IMR-90 (cell line): ENCODE measurements at regions of chr5 and their contacts with region 1.

Region 1: GRCh38 chr5:142655339-142656267 is 30.3 kb downstream of the FGF1 start:
- DNase-seq: peak; percentile 74
- ATAC-seq: peak; percentile 100
- H3K4me3 ChIP-seq: no peak overlapping the region
- H3K27ac ChIP-seq: no peak overlapping the region
- H3K4me1 ChIP-seq: peaks cover 2% of the 10 kb centered on the region; the same call in 1 of the 2 replicates
- H3K27me3 ChIP-seq: no peaks in the 10 kb centered on the region
- CTCF ChIP-seq: peak; percentile 99
- POLR2A ChIP-seq: peak; percentile 58; the same call in 1 of the 2 replicates
- RAD21 ChIP-seq: peak; percentile 100

Region 2: GRCh38 chr5:142600611-142601358 is 54.8 kb before region 1 on chr5:
- CTCF ChIA-PET with region 1: interaction called, 13 read pairs
- POLR2A ChIA-PET with region 1: no interaction called
- dilution Hi-C with region 1: no loop called
- in situ Hi-C with region 1: no loop called
- intact Hi-C with region 1: no loop called
- DNase-seq: peak; percentile 91
- ATAC-seq: peak; percentile 92
- H3K4me3 ChIP-seq: peak overlapping the region; percentile 14; the same call in 1 of the 2 replicates
- H3K27ac ChIP-seq: peak overlapping the region; percentile 82
- H3K4me1 ChIP-seq: peaks cover 20% of the 10 kb centered on the region
- H3K27me3 ChIP-seq: no peaks in the 10 kb centered on the region
- CTCF ChIP-seq: no peak
- POLR2A ChIP-seq: no peak
- RAD21 ChIP-seq: peak; percentile 20

Region 3: DNA sequence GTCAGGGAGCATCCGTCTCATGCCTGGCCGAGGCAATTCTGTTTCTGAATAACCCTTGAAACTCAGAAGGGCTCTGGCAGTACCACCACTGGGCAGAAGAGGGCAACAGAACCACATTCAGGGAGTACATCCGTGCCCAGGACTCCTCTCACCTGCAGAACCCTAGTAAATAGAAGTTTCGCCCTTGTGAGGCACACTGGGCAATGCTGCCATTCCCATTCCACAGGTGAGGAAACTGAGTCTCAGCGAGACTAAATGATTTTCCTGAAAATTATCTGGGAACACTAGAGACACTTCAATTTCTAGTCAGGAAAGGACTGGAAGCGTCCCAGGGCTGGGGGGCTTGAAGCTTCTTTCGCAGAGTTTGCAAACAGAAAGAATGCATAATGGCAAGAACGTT is 44.4 kb before region 1 on chr5:
- CTCF ChIA-PET with region 1: interaction called, 19 read pairs
- POLR2A ChIA-PET with region 1: no interaction called
- dilution Hi-C with region 1: no loop called
- in situ Hi-C with region 1: no loop called
- intact Hi-C with region 1: loop called (anchors 1 kb)
- DNase-seq: peak; percentile 74
- ATAC-seq: peak; percentile 86
- H3K4me3 ChIP-seq: no peak overlapping the region
- H3K27ac ChIP-seq: no peak overlapping the region
- H3K4me1 ChIP-seq: peaks cover 16% of the 10 kb centered on the region
- H3K27me3 ChIP-seq: no peaks in the 10 kb centered on the region
- CTCF ChIP-seq: peak; percentile 96
- POLR2A ChIP-seq: peak; percentile 36; the same call in 1 of the 2 replicates
- RAD21 ChIP-seq: peak; percentile 96

Region 4: DNA sequence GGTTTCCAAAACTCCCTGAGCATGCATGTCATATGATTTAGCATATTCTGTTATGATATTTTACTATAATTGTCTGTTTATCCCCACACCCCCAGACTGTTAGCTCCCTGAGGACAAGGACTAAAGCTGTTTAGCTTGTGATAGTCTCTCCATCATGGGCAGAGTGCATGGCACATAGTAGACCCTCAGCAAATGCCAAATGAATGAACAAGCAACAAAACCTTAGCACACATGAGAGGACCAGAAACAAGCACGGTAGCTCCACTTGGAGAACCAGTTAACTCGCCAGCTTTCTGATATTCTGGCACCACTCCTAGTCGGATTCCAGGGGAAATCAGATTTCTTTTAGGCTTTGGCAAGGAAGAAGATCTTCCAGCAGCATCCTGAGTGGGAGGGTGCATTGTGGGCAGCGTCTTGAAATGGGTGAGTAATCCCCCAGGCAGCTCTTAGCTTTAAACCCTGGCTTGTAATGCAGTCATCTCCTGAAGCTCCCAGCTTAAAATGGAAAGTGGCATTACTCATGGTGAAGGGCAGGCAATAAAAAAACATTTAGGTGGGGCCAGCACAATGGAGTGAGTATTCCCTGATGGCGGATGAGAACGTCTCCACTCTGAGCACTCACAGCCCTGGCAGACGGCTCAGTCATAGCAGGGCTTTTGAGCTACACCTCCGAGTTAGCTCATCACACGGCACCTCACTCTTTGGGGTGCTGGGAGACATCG is 10.8 kb before region 1 on chr5:
- CTCF ChIA-PET with region 1: interaction called, 31 read pairs
- POLR2A ChIA-PET with region 1: no interaction called
- dilution Hi-C with region 1: no loop called
- in situ Hi-C with region 1: no loop called
- intact Hi-C with region 1: no loop called
- DNase-seq: peak; percentile 99
- ATAC-seq: peak; percentile 97
- H3K4me3 ChIP-seq: peak overlapping the region; percentile 2; the same call in 1 of the 2 replicates
- H3K27ac ChIP-seq: peak overlapping the region; percentile 79
- H3K4me1 ChIP-seq: peaks cover 23% of the 10 kb centered on the region
- H3K27me3 ChIP-seq: no peaks in the 10 kb centered on the region
- CTCF ChIP-seq: no peak
- POLR2A ChIP-seq: peak; percentile 60
- RAD21 ChIP-seq: no peak; the same call in 1 of the 2 replicates

Region 5: GRCh38 chr5:142685418-142686209 is 30.0 kb after region 1 on chr5 and contains the start of gene FGF1:
- CTCF ChIA-PET with region 1: interaction called, 10 read pairs
- POLR2A ChIA-PET with region 1: no interaction called
- dilution Hi-C with region 1: no loop called
- in situ Hi-C with region 1: no loop called
- intact Hi-C with region 1: no loop called
- DNase-seq: no peak
- ATAC-seq: no peak
- H3K4me3 ChIP-seq: no peak within 1 kb of the TSS
- H3K27ac ChIP-seq: no peak within 1 kb of the TSS
- H3K4me1 ChIP-seq: peaks cover 22% of the 10 kb centered on the region
- H3K27me3 ChIP-seq: no peaks in the 10 kb centered on the region
- CTCF ChIP-seq: no peak
- POLR2A ChIP-seq: no peak
- RAD21 ChIP-seq: no peak
- total RNA-seq, gene FGF1: 7.7 and 8.1 TPM in 2 replicates

Region 6: DNA sequence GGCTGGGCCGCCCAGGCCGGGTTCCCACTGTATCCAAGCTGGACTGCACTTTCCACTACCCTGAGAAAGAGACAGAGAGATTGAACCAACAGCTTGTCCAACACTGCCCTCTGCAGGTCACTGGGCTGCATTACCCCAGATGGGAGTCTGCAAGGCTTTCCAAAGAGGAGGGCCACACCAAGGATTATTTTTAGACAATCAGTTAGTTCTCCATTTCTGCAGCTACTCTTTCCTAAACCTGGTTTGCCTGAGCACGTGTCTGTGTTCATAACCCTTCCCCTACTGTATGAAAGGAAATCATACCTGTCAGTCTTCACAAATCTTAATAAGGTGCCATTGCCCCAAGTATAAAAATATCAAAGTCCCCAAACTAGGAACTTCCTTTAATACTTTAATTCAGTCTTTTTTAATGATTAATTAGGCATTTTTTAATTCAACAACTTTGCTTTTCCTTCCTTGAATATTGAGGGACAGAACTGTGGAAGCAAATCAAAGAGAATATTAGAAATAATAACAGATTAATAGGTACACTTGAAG is 43.6 kb after region 1 on chr5:
- CTCF ChIA-PET with region 1: interaction called, 67 read pairs
- POLR2A ChIA-PET with region 1: interaction called, 4 read pairs
- dilution Hi-C with region 1: no loop called
- in situ Hi-C with region 1: loop called (anchors 5 kb)
- intact Hi-C with region 1: loop called (anchors 1 kb)
- DNase-seq: peak; percentile 84
- ATAC-seq: peak; percentile 98
- H3K4me3 ChIP-seq: no peak overlapping the region
- H3K27ac ChIP-seq: no peak overlapping the region
- H3K4me1 ChIP-seq: peaks cover 10% of the 10 kb centered on the region
- H3K27me3 ChIP-seq: no peaks in the 10 kb centered on the region
- CTCF ChIP-seq: peak; percentile 99
- POLR2A ChIP-seq: peak; percentile 69
- RAD21 ChIP-seq: peak; percentile 100